Heart right ventricle (tissue), 16 donors: ENCODE measurements at regions of chr22 and their contacts with region 1.

Region 1: GRCh38 chr22:20319745-20320658 is at the start of gene DGCR6L:
- DNase-seq: peak; percentile 97 to 98
- ATAC-seq: peak; percentile 89 to 95 (median 92)
- H3K4me3 ChIP-seq: peak within 1 kb of the TSS; percentile 66 to 98 (median 90)
- H3K27ac ChIP-seq: peak within 1 kb of the TSS; percentile 77 to 98 (median 93)
- H3K4me1 ChIP-seq: peaks cover 13 to 47% (median 35%) of the 10 kb centered on the region in 9 donors
- H3K27me3 ChIP-seq: no peaks in the 10 kb centered on the region
- CTCF ChIP-seq: peak in 1 of 9 donors; percentile 2
- total RNA-seq, gene DGCR6L: 37.9 to 65.9 (median 40.5) TPM

Region 2: DNA sequence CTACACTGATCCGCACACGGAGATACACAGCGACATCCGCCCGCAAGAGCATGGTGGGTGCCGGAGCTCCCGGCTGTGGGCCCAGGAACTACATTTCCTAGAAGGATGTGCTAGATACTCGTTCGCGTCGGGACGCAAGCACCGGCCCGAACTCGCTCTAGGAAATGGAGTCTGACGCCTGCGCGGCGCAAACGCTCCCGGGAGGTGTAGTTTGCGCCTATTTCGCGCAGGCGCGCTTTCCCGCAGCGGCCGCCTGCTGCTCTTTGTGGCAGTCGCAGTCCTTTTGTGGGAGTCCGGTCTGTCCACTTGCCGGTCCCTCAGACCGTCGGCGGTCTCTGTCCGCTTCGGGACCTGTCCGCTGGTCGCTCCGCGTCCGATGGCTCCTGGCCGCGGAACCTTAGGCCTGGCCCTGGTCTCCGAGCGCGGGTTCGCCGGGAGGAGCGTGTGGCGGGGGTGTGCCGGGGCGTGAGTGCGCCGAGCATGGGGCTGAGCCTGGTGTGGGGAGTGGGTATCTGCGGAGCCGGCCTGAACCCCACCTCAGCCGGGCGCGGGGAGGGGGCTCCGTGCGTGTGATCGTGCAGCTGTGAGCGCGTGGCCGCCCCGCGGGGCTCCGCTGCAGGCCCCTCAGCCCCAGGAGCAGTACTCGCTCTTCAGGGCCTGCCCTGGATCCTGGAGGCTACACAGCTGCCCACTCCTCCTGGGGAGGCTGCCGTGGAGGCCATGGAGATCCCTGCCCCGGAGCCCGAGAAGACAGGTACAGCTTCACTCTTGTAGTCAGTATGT is 74.1 kb after region 1 on chr22 and contains the start of gene ZNF74:
- intact Hi-C with region 1: loop called in 2 of 10 experiments (anchors 5 to 10 kb)
- DNase-seq: peak; percentile 90 to 92
- ATAC-seq: peak; percentile 94 to 99 (median 98)
- H3K4me3 ChIP-seq: peak within 1 kb of the TSS; percentile 67 to 93 (median 79)
- H3K27ac ChIP-seq: peak within 1 kb of the TSS; percentile 4 to 88 (median 68)
- H3K4me1 ChIP-seq: peaks cover 5 to 32% (median 20%) of the 10 kb centered on the region in 9 donors
- H3K27me3 ChIP-seq: no peaks in the 10 kb centered on the region
- CTCF ChIP-seq: peak in 1 of 9 donors; percentile 17
- total RNA-seq, gene ZNF74: 1.9 to 6.7 (median 4.6) TPM

Region 3: GRCh38 chr22:20606041-20606783 is 286.2 kb after region 1 on chr22:
- intact Hi-C with region 1: no loop called
- DNase-seq: peak; percentile 22 to 50
- ATAC-seq: peak in 7 of 8 donors; percentile 35 to 72 (median 58)
- H3K4me3 ChIP-seq: no peak overlapping the region
- H3K27ac ChIP-seq: no peak overlapping the region
- H3K4me1 ChIP-seq: no peaks in the 10 kb centered on the region
- H3K27me3 ChIP-seq: peaks cover 0 to 11% (median 0%) of the 10 kb centered on the region in 7 donors
- CTCF ChIP-seq: peak; percentile 18 to 68 (median 58)